ENCODE measurements at regions of chr1 and their contacts with region 1.

Region 1: GRCh38 chr1:71080739-71081696 is at the start of gene ZRANB2:
- DNase-seq: peak; percentile 91
- H3K4me3 Mint-ChIP-seq: peak within 1 kb of the TSS; percentile 98
- H3K27ac Mint-ChIP-seq: peak within 1 kb of the TSS; percentile 99
- H3K4me1 Mint-ChIP-seq: peaks cover 20% of the 10 kb centered on the region
- H3K27me3 Mint-ChIP-seq: peaks cover 16% of the 10 kb centered on the region
- total RNA-seq, gene ZRANB2: 105 to 107 TPM

Region 2: DNA sequence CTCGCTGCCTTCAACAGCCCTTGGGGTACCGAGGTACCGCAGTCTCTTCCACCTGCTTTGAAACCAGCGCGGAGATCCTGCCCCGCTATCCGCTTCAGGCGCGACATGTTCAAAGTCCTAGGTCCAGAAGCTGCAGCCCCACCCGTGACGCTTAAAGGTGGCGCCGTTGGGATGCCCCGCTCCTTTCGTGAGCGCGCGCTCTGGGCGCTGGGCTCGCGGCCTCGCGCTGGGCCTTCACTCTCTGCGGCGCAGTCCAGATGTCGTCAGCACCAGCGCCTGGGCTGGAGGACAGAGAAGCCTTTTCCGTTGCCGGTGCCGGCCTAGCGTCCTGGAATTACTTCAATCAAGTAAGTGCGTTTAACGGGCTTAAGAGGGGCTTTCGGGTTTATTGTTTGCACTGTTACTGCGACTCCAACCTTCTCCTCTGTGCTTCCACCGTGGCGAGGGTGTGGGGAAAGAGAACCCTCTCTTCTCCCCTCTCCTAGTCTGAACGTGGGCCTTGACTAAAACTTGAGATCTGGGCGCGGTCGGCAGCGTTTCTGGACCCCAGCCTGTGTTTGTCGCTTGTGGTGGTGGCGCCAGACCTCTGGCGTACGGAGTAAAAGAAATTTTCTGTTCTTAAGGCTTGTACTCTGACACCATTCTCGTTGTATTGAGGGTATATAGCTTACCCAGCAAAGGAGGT is 875.4 kb before region 1 on chr1 and contains the start of gene LRRC40:
- CTCF ChIA-PET with region 1: interaction called, 4 read pairs
- POLR2A ChIA-PET with region 1: interaction called, 3 read pairs
- intact Hi-C with region 1: loop called (anchors 1 kb)
- DNase-seq: peak; percentile 98
- H3K4me3 Mint-ChIP-seq: peak within 1 kb of the TSS; percentile 99
- H3K27ac Mint-ChIP-seq: peak within 1 kb of the TSS; percentile 94
- H3K4me1 Mint-ChIP-seq: peaks cover 63% of the 10 kb centered on the region
- H3K27me3 Mint-ChIP-seq: no peaks in the 10 kb centered on the region
- total RNA-seq, gene LRRC40: 22.1 to 24.7 TPM

Region 3: GRCh38 chr1:71039661-71040262 is 41.3 kb before region 1 on chr1:
- CTCF ChIA-PET with region 1: no interaction called
- POLR2A ChIA-PET with region 1: no interaction called
- intact Hi-C with region 1: no loop called
- DNase-seq: no peak
- H3K4me3 Mint-ChIP-seq: no peak overlapping the region
- H3K27ac Mint-ChIP-seq: no peak overlapping the region
- H3K4me1 Mint-ChIP-seq: peaks cover 2% of the 10 kb centered on the region
- H3K27me3 Mint-ChIP-seq: peaks cover 36% of the 10 kb centered on the region

Region 4: GRCh38 chr1:72282271-72283021 is 1201.4 kb after region 1 on chr1 and contains the start of gene NEGR1:
- CTCF ChIA-PET with region 1: no interaction called
- POLR2A ChIA-PET with region 1: no interaction called
- intact Hi-C with region 1: loop called (anchors 5 kb)
- DNase-seq: peak; percentile 67
- H3K4me3 Mint-ChIP-seq: peak within 1 kb of the TSS; percentile 56
- H3K27ac Mint-ChIP-seq: no peak within 1 kb of the TSS
- H3K4me1 Mint-ChIP-seq: peaks cover 13% of the 10 kb centered on the region
- H3K27me3 Mint-ChIP-seq: peaks cover 15% of the 10 kb centered on the region
- total RNA-seq, gene NEGR1: not detected